ENCODE measurements at regions of chr10 and their contacts with region 1.

Region 1: GRCh38 chr10:43689955-43690771 is 41.5 kb upstream of the ZNF32 start:
- DNase-seq: peak; percentile 86 to 88 (median 87)
- ATAC-seq: peak; percentile 95 to 97 (median 96)
- H3K4me3 ChIP-seq: peak overlapping the region; percentile 49 to 64 (median 59)
- H3K27ac ChIP-seq: peak overlapping the region; percentile 37 to 66 (median 63)
- H3K4me1 ChIP-seq: peaks cover 0 to 26% (median 0%) of the 10 kb centered on the region in 4 donors
- H3K27me3 ChIP-seq: no peaks in the 10 kb centered on the region
- CTCF ChIP-seq: peak; percentile 75 to 89 (median 87)
- POLR2A ChIP-seq: peak; percentile 14

Region 2: DNA sequence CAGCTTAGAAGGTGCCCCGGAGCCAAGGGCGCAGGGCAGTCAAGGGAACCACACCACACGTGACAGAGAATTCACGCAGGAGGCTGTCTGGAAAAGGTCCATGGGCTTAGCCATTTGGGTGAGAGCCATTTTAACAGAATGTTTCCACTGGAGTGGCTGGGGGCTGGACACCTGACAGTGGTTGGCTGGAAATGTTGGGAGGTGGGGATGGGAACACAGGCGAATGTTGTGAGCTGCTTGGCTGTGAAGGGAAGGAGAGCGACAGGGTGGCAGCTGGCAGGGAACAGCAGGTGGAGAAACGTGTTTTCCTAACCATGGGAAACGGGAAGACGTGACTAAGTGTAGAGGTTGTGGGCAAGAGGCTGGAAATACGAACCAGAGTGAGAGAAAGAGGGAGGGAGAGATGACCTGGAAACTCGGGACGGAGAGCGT is 59.0 kb after region 1 on chr10:
- intact Hi-C with region 1: no loop called
- DNase-seq: no peak
- ATAC-seq: no peak
- H3K4me3 ChIP-seq: no peak overlapping the region
- H3K27ac ChIP-seq: no peak overlapping the region
- H3K4me1 ChIP-seq: no peaks in the 10 kb centered on the region
- H3K27me3 ChIP-seq: no peaks in the 10 kb centered on the region
- CTCF ChIP-seq: no peak
- POLR2A ChIP-seq: no peak

Region 3: GRCh38 chr10:44046605-44047004 is 356.4 kb after region 1 on chr10:
- intact Hi-C with region 1: loop called in 1 of 2 experiments (anchors 10 kb)
- DNase-seq: no peak
- ATAC-seq: no peak
- H3K4me3 ChIP-seq: no peak overlapping the region
- H3K27ac ChIP-seq: no peak overlapping the region
- H3K4me1 ChIP-seq: no peaks in the 10 kb centered on the region
- H3K27me3 ChIP-seq: no peaks in the 10 kb centered on the region
- CTCF ChIP-seq: no peak
- POLR2A ChIP-seq: no peak

Measured in right lobe of liver (tissue), 6 donors.